AG04449 (cell line): ENCODE measurements at regions of chr15 and their contacts with region 1.

Region 1: DNA sequence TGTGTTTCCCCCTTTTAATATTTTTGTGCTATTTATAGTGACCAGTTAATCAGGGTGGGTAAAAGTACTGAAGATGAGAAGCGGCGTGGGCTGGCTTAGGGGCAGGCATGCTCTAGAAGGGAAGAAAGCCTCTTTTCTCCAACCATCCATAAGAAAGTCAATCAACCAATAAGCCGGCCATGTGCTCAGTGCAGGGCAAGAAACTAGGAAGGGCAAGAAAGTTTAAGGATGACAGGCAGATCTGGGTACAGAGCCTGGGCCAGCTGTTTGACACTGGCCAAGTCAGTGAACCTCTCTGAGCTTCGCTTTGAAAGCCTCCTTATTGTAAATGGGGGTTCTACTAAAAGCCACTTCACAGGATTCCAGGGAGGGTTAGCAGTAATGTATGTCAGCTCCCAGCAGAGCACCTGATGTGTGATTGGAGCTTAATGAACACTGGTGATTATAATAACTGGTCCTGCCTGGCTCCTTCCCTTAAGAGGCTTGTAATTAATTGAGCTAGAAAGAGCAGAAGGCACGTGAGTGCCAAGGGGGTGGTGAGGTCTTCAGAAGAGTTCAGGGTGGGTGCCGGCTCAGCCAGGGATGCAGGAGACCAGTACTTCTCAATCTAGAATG is 5.7 kb upstream of the CHRNA3 start:
- DNase-seq: no peak
- H3K4me3 ChIP-seq: no peak overlapping the region
- CTCF ChIP-seq: no peak

Region 2: DNA sequence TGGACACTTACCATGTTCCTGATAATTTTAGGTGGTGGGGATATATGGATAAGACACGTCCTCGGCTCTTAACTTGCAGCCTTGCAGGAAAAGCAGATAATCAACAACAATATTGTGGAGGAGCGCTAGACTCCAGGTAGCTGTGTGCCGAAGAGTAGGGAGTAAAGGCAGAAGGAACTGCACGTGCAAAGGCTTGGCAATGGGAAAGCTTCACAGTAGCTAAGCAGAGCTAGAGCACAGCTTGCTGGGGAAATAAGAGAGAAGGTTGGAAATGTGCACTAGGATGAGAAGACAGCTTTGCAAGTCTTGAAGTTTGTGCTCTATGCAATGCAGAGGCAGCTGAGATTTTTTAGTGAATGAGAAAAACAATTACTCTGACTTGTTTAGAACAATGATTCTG is 73.9 kb before region 1 on chr15:
- CTCF ChIA-PET with region 1: no interaction called
- POLR2A ChIA-PET with region 1: no interaction called
- DNase-seq: no peak
- H3K4me3 ChIP-seq: no peak overlapping the region
- CTCF ChIP-seq: no peak

Region 3: DNA sequence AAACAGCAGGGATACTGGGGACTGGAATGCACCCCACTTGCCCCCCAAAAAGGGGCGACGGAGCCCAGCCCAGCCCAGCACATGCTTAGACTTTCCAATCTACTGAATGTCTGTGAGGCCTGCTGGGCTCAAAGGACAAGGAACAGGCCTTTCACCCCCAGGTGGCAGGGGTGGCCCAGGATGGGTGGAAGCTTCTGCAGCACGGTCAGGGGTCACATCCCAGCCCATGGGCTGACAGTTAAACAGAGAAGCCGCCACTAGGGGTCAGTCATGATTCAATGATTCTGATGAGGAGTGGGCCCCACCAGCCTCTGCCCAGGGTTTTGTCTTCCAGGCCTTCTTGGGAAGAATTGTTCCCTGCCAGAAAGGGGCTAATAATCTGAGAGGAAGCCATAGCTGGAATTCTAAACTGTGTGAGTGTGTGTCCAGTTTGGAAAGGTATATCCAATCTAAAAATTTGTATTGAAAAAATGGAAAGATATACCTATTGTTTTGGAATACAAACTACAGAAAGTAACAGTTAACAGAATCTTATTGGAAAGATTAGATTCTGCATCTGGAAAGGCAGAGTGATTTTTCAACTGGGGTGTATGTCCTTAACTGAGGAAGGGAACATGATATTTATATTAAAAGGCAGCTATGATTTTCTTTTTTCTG is 12.3 kb after region 1 on chr15:
- CTCF ChIA-PET with region 1: interaction called, 15 read pairs
- POLR2A ChIA-PET with region 1: no interaction called
- DNase-seq: no peak
- H3K4me3 ChIP-seq: no peak overlapping the region
- CTCF ChIP-seq: peak; percentile 53

Region 4: GRCh38 chr15:78804391-78804792 is 177.9 kb after region 1 on chr15:
- CTCF ChIA-PET with region 1: no interaction called
- POLR2A ChIA-PET with region 1: no interaction called
- DNase-seq: no peak
- H3K4me3 ChIP-seq: no peak overlapping the region
- CTCF ChIP-seq: no peak